ENCODE measurements at regions of chr4 and their contacts with region 1.

Region 1: GRCh38 chr4:88533937-88534750 is 10.6 kb upstream of the PYURF start:
- DNase-seq: no peak
- ATAC-seq: no peak
- H3K4me3 ChIP-seq: no peak overlapping the region
- H3K27ac ChIP-seq: no peak overlapping the region
- H3K4me1 ChIP-seq: peaks cover 0 to 4% of the 10 kb centered on the region in 2 donors
- H3K27me3 ChIP-seq: no peaks in the 10 kb centered on the region
- CTCF ChIP-seq: no peak

Region 2: GRCh38 chr4:88661739-88662138 is 127.6 kb after region 1 on chr4:
- intact Hi-C with region 1: loop called in 1 of 2 experiments (anchors 10 kb)
- DNase-seq: no peak
- ATAC-seq: no peak
- H3K4me3 ChIP-seq: no peak overlapping the region
- H3K27ac ChIP-seq: no peak overlapping the region
- H3K4me1 ChIP-seq: no peaks in the 10 kb centered on the region
- H3K27me3 ChIP-seq: no peaks in the 10 kb centered on the region
- CTCF ChIP-seq: no peak

Region 3: DNA sequence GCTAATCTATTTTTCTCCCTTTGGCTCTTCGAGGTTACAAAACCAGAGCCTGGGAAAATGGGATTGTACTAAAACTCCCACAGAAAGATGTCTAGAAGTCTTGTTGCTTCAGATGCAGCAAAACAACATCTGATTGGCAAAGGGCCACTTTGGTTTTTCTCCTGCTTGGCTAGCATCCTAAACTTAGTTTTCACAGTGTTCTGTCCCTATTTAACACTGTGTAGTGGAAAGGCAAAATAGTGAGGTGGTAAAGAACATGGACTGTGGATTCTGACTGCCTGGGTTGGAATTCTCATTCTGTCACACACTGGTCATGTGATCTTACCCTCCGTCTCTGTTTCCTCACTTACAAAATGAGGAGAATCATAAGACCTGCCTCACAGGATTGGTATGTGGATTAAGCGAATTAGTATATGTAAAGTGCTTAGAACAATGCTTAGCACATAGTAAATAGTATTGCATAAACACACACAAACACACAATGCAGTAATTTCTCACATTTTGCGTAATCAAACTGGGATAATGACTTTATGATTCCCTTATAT is 600.7 kb after region 1 on chr4:
- intact Hi-C with region 1: no loop called
- DNase-seq: peak in 2 of 4 donors; percentile 22 to 29
- ATAC-seq: peak; percentile 63
- H3K4me3 ChIP-seq: no peak overlapping the region
- H3K27ac ChIP-seq: no peak overlapping the region
- H3K4me1 ChIP-seq: peaks cover 0 to 2% of the 10 kb centered on the region in 2 donors
- H3K27me3 ChIP-seq: no peaks in the 10 kb centered on the region
- CTCF ChIP-seq: no peak